ENCODE measurements at regions of chr4 and their contacts with region 1.

Region 1: DNA sequence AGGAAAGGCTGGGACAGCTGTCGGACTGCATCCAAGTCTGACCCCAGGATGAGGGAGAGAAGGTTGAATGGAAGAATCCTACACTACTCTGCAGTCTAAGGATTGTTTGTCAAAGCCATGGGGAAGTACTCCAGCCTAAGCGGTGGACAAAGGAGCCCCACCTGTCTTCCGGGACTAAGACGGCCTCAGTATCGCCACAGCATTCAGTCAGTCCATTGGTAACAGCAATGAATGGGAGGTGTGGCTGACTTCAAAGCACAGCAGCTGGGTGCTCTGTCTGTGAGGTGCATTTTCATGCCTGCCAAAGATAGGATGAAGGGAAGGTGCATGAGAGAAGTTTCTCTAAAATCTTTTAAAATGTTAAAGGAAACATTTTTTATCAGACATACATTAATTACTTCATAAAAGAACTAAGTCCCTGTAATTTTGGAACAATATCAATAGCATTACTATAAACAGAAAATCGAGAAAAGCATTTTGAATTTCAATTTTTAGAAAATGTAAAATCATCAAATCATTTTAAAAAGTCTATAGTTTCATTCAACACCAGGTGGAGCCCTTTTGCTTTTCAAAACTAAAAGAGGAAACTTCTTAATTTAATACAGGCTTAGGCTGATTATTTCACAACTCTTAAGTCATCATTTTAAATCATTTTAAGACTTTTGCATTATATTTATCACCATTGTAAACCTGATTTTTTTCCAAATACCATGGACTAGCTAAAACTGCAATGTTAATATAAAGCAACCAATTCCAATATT is 27.6 kb upstream of the INTU start:
- DNase-seq: peak in 1 of 2 donors; percentile 12
- ATAC-seq: peak; percentile 88

Region 2: GRCh38 chr4:127732613-127733328 is 127.6 kb after region 1 on chr4:
- intact Hi-C with region 1: loop called in 1 of 2 experiments (anchors 5 kb)
- DNase-seq: no peak
- ATAC-seq: peak; percentile 47

Measured in left colon (tissue), 2 donors.